ENCODE measurements at regions of chrX and their contacts with region 1.

Region 1: GRCh38 chrX:40169193-40170101 is 71.7 kb upstream of the BCOR start:
- DNase-seq: peak; percentile 78
- H3K4me3 ChIP-seq: no peak overlapping the region
- H3K27ac ChIP-seq: no peak overlapping the region
- H3K4me1 ChIP-seq: peaks cover 33% of the 10 kb centered on the region
- H3K27me3 ChIP-seq: no peaks in the 10 kb centered on the region
- CTCF ChIP-seq: peak; percentile 52 to 56
- POLR2A ChIP-seq: no peak

Region 2: GRCh38 chrX:38803586-38804431 is 1365.6 kb before region 1 on chrX:
- CTCF ChIA-PET with region 1: no interaction called
- POLR2A ChIA-PET with region 1: no interaction called
- dilution Hi-C with region 1: no loop called
- intact Hi-C with region 1: loop called (anchors 10 kb)
- DNase-seq: peak; percentile 67
- H3K4me3 ChIP-seq: peak overlapping the region; percentile 52 to 85 (median 55)
- H3K27ac ChIP-seq: peak overlapping the region; percentile 82
- H3K4me1 ChIP-seq: peaks cover 15% of the 10 kb centered on the region
- H3K27me3 ChIP-seq: no peaks in the 10 kb centered on the region
- CTCF ChIP-seq: no peak
- POLR2A ChIP-seq: peak; percentile 37

Region 3: GRCh38 chrX:39688576-39689375 is 480.7 kb before region 1 on chrX:
- CTCF ChIA-PET with region 1: no interaction called
- POLR2A ChIA-PET with region 1: no interaction called
- dilution Hi-C with region 1: no loop called
- intact Hi-C with region 1: no loop called
- DNase-seq: peak; percentile 18
- H3K4me3 ChIP-seq: peak overlapping the region in 2 of 3 experiments; percentile 23 to 40
- H3K27ac ChIP-seq: no peak overlapping the region
- H3K4me1 ChIP-seq: peaks cover 10% of the 10 kb centered on the region
- H3K27me3 ChIP-seq: peaks cover 0 to 4% of the 10 kb centered on the region in 2 experiments
- CTCF ChIP-seq: no peak
- POLR2A ChIP-seq: no peak

Region 4: GRCh38 chrX:39730662-39731397 is 438.6 kb before region 1 on chrX:
- CTCF ChIA-PET with region 1: interaction called, 5 read pairs
- POLR2A ChIA-PET with region 1: no interaction called
- dilution Hi-C with region 1: no loop called
- intact Hi-C with region 1: loop called (anchors 1 kb)
- DNase-seq: peak; percentile 71
- H3K4me3 ChIP-seq: no peak overlapping the region
- H3K27ac ChIP-seq: peak overlapping the region; percentile 2
- H3K4me1 ChIP-seq: peaks cover 29% of the 10 kb centered on the region
- H3K27me3 ChIP-seq: no peaks in the 10 kb centered on the region
- CTCF ChIP-seq: peak; percentile 47 to 60
- POLR2A ChIP-seq: no peak

Region 5: GRCh38 chrX:39814391-39814790 is 355.1 kb before region 1 on chrX:
- CTCF ChIA-PET with region 1: interaction called, 3 read pairs
- POLR2A ChIA-PET with region 1: no interaction called
- dilution Hi-C with region 1: no loop called
- intact Hi-C with region 1: loop called (anchors 1 kb)
- DNase-seq: peak; percentile 20
- H3K4me3 ChIP-seq: no peak overlapping the region
- H3K27ac ChIP-seq: no peak overlapping the region
- H3K4me1 ChIP-seq: peaks cover 16% of the 10 kb centered on the region
- H3K27me3 ChIP-seq: no peaks in the 10 kb centered on the region
- CTCF ChIP-seq: peak; percentile 27 to 31
- POLR2A ChIP-seq: no peak

Region 6: DNA sequence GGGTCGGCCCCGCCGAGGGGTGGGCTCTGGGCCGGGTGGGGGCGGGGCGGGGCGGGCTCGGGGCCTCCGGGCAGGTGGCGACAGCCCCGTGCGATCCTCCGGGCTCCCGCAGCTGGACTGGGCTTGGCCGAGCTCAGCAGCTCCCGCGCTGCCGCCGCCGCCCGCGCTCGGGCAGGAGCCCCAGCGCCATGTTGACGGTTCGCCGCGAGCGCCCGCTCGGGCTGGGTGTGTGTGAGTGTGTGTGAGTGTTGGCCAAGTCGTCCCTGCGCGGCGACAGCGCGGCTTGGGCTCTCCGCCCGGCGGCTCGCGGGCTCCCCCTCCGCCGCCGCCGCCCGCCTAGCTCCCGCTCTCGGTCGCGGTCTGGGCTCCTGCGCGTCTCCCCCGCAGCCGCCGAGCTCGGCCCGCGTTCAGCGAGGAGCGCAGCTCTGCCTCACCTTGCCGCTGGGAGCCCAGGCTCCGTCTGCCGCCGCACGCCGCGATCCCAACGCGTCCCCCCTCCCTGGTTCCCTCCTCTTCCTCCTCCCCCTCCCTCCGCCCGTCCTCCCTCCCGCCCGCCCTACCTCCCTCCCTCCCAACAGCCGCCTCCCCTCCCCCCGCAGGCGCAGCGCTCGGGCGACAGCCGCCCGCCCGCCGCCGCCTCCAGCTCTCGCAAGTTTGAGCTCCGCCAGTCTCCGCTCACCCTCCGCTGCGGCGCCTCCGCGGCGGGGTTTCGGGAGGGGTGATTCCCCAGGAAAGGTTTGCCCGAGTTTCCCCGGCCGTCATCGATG is 71.8 kb before region 1 on chrX and contains the start of gene BCOR:
- CTCF ChIA-PET with region 1: interaction called, 7 read pairs
- POLR2A ChIA-PET with region 1: no interaction called
- dilution Hi-C with region 1: no loop called
- intact Hi-C with region 1: loop called (anchors 1 kb)
- DNase-seq: peak; percentile 51
- H3K4me3 ChIP-seq: peak within 1 kb of the TSS; percentile 55 to 72 (median 59)
- H3K27ac ChIP-seq: peak within 1 kb of the TSS; percentile 41
- H3K4me1 ChIP-seq: peaks cover 12% of the 10 kb centered on the region
- H3K27me3 ChIP-seq: no peaks in the 10 kb centered on the region
- CTCF ChIP-seq: no peak
- POLR2A ChIP-seq: peak; percentile 74
- total RNA-seq, gene BCOR: 23.9 and 24.2 TPM in 2 replicates

Region 7: GRCh38 chrX:40153335-40154249 is 15.9 kb before region 1 on chrX:
- CTCF ChIA-PET with region 1: interaction called, 10 read pairs
- POLR2A ChIA-PET with region 1: no interaction called
- dilution Hi-C with region 1: no loop called
- intact Hi-C with region 1: loop called (anchors 2 kb)
- DNase-seq: no peak
- H3K4me3 ChIP-seq: peak overlapping the region; percentile 7 to 38 (median 15)
- H3K27ac ChIP-seq: peak overlapping the region; percentile 12
- H3K4me1 ChIP-seq: peaks cover 32% of the 10 kb centered on the region
- H3K27me3 ChIP-seq: no peaks in the 10 kb centered on the region
- CTCF ChIP-seq: no peak
- POLR2A ChIP-seq: no peak